Activated CD4-positive, alpha-beta memory T cell treated with anti-CD3 and anti-CD28 coated beads for 36 hours (primary cell): ENCODE measurements at regions of chr12 and their contacts with region 1.

Region 1: GRCh38 chr12:133080368-133081158 is at the start of gene ZNF140:
- DNase-seq: peak; percentile 97
- H3K4me3 Mint-ChIP-seq: no peak within 1 kb of the TSS
- H3K27ac Mint-ChIP-seq: no peak within 1 kb of the TSS
- H3K4me1 Mint-ChIP-seq: peaks cover 7% of the 10 kb centered on the region
- H3K27me3 Mint-ChIP-seq: no peaks in the 10 kb centered on the region
- total RNA-seq, gene ZNF140: 11.8 to 14.1 TPM

Region 2: DNA sequence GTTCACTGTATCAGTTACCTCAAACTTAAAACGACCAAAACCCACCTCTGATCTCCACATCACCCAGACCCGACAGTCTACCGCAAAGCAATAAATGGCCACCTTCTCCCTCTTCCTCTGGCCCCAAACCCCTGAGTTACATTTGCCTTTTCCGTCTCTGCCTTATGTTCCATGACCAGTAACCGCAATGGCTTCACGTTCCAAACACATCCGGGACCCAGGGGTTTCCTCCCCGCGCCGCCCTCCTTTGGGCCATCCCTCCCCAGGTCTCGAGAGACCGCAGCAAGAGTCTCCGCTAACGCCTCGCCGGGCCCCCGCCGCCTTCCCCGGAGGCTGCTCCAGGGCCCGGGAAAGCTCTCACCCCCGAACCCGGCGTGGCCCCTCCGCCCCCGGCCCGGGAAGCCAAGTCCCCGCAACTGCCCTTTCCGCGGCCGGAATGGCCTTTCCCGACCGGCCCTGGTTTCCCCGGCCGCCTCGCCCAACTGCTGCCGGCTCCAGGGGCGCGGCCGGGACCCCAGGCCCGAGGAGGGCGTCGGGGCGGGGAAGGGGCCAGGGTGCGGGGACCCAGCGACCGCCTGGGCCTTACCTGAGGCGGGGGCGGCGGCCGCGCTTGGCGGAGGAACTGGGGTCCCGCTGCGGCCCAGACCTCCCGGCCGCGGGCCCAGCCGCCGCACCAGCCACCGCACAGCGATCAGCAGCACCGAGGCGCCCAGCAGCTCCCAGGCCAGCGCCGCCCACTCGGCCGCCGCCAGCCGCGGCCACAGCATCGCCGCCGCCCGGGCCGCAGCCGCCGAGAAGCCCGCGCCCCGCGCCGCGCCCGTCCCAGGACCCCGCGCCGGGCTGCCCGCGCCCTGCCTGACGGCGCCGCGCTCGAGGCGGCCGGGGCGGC is 319.3 kb before region 1 on chr12 and contains the start of gene ANKLE2:
- CTCF ChIA-PET with region 1: no interaction called
- POLR2A ChIA-PET with region 1: no interaction called
- intact Hi-C with region 1: loop called (anchors 2 kb)
- DNase-seq: peak; percentile 86
- H3K4me3 Mint-ChIP-seq: peak within 1 kb of the TSS; percentile 88
- H3K27ac Mint-ChIP-seq: peak within 1 kb of the TSS; percentile 97
- H3K4me1 Mint-ChIP-seq: peaks cover 26% of the 10 kb centered on the region
- H3K27me3 Mint-ChIP-seq: no peaks in the 10 kb centered on the region
- total RNA-seq, gene ANKLE2: 112 to 123 TPM

Region 3: GRCh38 chr12:132887513-132888351 is 192.8 kb before region 1 on chr12 and contains the start of gene CHFR:
- CTCF ChIA-PET with region 1: no interaction called
- POLR2A ChIA-PET with region 1: no interaction called
- intact Hi-C with region 1: loop called (anchors 1 kb)
- DNase-seq: peak; percentile 98
- H3K4me3 Mint-ChIP-seq: peak within 1 kb of the TSS; percentile 99
- H3K27ac Mint-ChIP-seq: peak within 1 kb of the TSS; percentile 100
- H3K4me1 Mint-ChIP-seq: peaks cover 17% of the 10 kb centered on the region
- H3K27me3 Mint-ChIP-seq: no peaks in the 10 kb centered on the region
- total RNA-seq, gene CHFR: 41.2 to 42.9 TPM

Region 4: DNA sequence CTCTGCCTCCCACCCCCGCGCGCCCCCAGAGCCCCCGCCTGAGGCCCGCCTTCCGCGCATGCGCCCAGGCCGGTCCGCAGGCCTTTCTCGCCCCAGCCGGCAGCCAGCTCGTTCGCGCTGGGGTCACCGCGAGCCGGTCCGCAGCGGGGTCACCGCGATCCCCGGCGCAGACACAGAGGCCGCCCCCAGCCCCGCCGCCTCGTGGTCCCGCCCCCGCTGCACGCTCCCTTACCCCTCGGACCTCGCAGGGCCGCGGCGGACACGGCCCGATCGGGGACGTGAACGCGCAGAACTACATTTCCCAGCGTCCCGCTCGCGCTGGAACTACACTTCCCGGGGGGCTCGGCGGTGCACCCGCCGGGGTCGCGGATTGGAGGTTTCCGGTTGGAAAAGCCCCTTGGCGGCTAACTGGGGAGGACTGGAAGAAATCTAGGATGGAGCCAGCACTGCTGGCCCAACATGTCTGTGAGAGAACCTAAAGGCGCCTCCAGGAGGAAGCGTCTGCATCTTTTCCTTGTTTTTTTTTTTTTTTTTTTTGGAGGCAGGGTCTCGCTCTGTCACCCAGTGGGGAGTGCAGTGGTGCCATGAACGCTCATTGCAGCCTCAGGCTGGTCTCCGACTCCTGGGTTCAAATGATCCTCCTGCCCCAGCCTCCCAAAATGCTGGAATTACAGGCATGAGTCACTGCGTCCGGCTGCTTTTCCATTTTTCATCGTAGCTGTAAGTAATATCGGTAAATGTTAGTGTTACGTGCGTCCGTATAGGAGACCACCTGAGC is 124.4 kb before region 1 on chr12 and contains the start of gene ZNF605:
- CTCF ChIA-PET with region 1: no interaction called
- POLR2A ChIA-PET with region 1: interaction called, 3 read pairs
- intact Hi-C with region 1: loop called (anchors 1 kb)
- DNase-seq: peak; percentile 93
- H3K4me3 Mint-ChIP-seq: peak within 1 kb of the TSS; percentile 88
- H3K27ac Mint-ChIP-seq: peak within 1 kb of the TSS; percentile 89
- H3K4me1 Mint-ChIP-seq: peaks cover 31% of the 10 kb centered on the region
- H3K27me3 Mint-ChIP-seq: no peaks in the 10 kb centered on the region
- total RNA-seq, gene ZNF605: 4.6 to 5.3 TPM

Region 5: DNA sequence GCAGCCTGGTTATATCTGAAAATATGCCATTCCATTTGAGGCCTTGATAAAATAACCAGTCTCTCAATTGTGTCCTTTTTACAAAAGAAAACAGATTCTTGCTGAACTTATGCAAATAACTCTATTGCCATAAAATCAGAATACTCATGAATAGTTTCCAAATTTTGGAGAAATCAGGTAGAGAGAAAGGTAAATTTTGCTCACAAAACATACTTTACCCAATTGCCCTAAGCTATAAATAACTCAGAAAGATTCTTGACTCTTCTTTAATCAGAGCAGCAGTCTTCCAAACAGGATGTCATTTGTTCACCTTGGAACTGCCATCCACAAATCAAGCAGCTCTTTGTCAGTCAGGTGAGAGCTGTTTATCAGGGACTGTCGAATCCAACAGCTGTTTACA is 81.8 kb before region 1 on chr12:
- CTCF ChIA-PET with region 1: no interaction called
- POLR2A ChIA-PET with region 1: no interaction called
- intact Hi-C with region 1: no loop called
- DNase-seq: no peak
- H3K4me3 Mint-ChIP-seq: no peak overlapping the region
- H3K27ac Mint-ChIP-seq: no peak overlapping the region
- H3K4me1 Mint-ChIP-seq: peaks cover 6% of the 10 kb centered on the region
- H3K27me3 Mint-ChIP-seq: no peaks in the 10 kb centered on the region

Region 6: GRCh38 chr12:133023566-133023965 is 57.0 kb before region 1 on chr12:
- CTCF ChIA-PET with region 1: no interaction called
- POLR2A ChIA-PET with region 1: no interaction called
- intact Hi-C with region 1: no loop called
- DNase-seq: no peak
- H3K4me3 Mint-ChIP-seq: no peak overlapping the region
- H3K27ac Mint-ChIP-seq: no peak overlapping the region
- H3K4me1 Mint-ChIP-seq: no peaks in the 10 kb centered on the region
- H3K27me3 Mint-ChIP-seq: no peaks in the 10 kb centered on the region

Region 7: GRCh38 chr12:133037207-133038005 is 43.2 kb before region 1 on chr12 and contains the start of gene ZNF84:
- CTCF ChIA-PET with region 1: no interaction called
- POLR2A ChIA-PET with region 1: interaction called, 5 read pairs
- intact Hi-C with region 1: loop called (anchors 1 kb)
- DNase-seq: peak; percentile 98
- H3K4me3 Mint-ChIP-seq: peak within 1 kb of the TSS; percentile 93
- H3K27ac Mint-ChIP-seq: peak within 1 kb of the TSS; percentile 93
- H3K4me1 Mint-ChIP-seq: peaks cover 7% of the 10 kb centered on the region
- H3K27me3 Mint-ChIP-seq: no peaks in the 10 kb centered on the region
- total RNA-seq, gene ZNF84: 10.1 to 11.8 TPM

Region 8: GRCh38 chr12:133058203-133059125 is 22.1 kb before region 1 on chr12:
- CTCF ChIA-PET with region 1: no interaction called
- POLR2A ChIA-PET with region 1: no interaction called
- intact Hi-C with region 1: no loop called
- DNase-seq: no peak
- H3K4me3 Mint-ChIP-seq: no peak overlapping the region
- H3K27ac Mint-ChIP-seq: no peak overlapping the region
- H3K4me1 Mint-ChIP-seq: no peaks in the 10 kb centered on the region
- H3K27me3 Mint-ChIP-seq: no peaks in the 10 kb centered on the region

Region 9: GRCh38 chr12:133181238-133181959 is 100.8 kb after region 1 on chr12 and contains the start of gene ZNF268:
- CTCF ChIA-PET with region 1: interaction called, 10 read pairs
- POLR2A ChIA-PET with region 1: interaction called, 6 read pairs
- intact Hi-C with region 1: loop called (anchors 1 kb)
- DNase-seq: peak; percentile 94
- H3K4me3 Mint-ChIP-seq: peak within 1 kb of the TSS; percentile 95
- H3K27ac Mint-ChIP-seq: peak within 1 kb of the TSS; percentile 80
- H3K4me1 Mint-ChIP-seq: peaks cover 12% of the 10 kb centered on the region
- H3K27me3 Mint-ChIP-seq: no peaks in the 10 kb centered on the region
- total RNA-seq, gene ZNF268: 9.2 to 11.8 TPM